A549 (cell line): ENCODE measurements at regions of chr4 and their contacts with region 1.

Region 1: GRCh38 chr4:53929955-53930798 is 134.2 kb downstream of the CHIC2 start:
- DNase-seq: peak; percentile 65 to 78
- ATAC-seq: peak; percentile 96 to 97
- H3K4me3 ChIP-seq: no peak overlapping the region
- H3K27ac ChIP-seq: peak overlapping the region; percentile 15 to 53; a peak in 1 of 6 replicates
- H3K4me1 ChIP-seq: peaks cover 16% of the 10 kb centered on the region; the same call in 1 of the 3 replicates
- CTCF ChIP-seq: peak; percentile 67
- EP300 ChIP-seq: no peak
- POLR2A ChIP-seq: no peak
- RAD21 ChIP-seq: peak; percentile 73 to 79

Region 2: DNA sequence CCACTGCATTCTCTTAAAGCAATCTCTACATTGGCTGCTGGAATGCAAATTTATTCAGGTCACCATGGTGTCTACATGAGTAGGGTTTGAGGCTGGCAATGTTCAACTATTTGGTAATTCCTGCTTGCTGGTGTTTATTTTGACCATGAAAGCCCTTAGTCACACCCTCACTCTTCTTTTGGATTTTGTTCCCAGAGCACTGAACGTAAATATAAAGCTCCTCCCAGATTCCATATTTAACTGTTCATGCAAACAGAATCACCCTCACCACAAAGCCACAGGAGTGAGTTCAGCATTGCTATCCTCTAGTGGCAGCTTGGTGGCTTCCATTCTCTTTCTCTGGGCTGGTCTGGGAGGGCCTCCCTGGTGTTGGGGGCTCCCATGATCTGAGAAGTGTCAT is 421.7 kb before region 1 on chr4:
- CTCF ChIA-PET with region 1: no interaction called
- POLR2A ChIA-PET with region 1: no interaction called
- DNase-seq: peak in 1 of 2 experiments; percentile 10
- ATAC-seq: no peak
- H3K4me3 ChIP-seq: no peak overlapping the region
- H3K27ac ChIP-seq: no peak overlapping the region
- H3K4me1 ChIP-seq: no peaks in the 10 kb centered on the region
- CTCF ChIP-seq: no peak
- EP300 ChIP-seq: no peak
- POLR2A ChIP-seq: no peak
- RAD21 ChIP-seq: no peak

Region 3: DNA sequence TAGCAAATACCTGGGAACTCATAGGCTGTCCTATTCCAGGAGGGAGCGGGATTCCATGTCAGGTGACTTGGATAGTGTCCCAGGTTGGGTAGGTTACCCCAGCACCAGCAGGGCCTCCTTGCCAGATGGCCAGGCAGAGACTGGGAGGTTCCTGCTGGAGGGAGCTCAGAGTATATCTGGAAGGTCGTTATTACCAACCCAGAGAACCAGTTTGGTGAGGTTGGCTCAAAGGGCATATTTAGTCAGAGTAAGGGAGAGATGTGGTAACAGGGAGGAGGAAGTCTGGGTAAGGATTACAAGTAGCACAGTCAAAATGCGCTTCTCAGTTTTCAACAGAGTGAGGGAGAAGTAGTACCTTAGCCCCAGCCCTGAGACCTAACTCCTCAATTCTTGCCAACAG is 285.6 kb before region 1 on chr4:
- CTCF ChIA-PET with region 1: no interaction called
- POLR2A ChIA-PET with region 1: no interaction called
- DNase-seq: no peak
- ATAC-seq: no peak
- H3K4me3 ChIP-seq: no peak overlapping the region
- H3K27ac ChIP-seq: no peak overlapping the region
- H3K4me1 ChIP-seq: no peaks in the 10 kb centered on the region
- CTCF ChIP-seq: no peak
- EP300 ChIP-seq: no peak
- POLR2A ChIP-seq: no peak
- RAD21 ChIP-seq: no peak

Region 4: DNA sequence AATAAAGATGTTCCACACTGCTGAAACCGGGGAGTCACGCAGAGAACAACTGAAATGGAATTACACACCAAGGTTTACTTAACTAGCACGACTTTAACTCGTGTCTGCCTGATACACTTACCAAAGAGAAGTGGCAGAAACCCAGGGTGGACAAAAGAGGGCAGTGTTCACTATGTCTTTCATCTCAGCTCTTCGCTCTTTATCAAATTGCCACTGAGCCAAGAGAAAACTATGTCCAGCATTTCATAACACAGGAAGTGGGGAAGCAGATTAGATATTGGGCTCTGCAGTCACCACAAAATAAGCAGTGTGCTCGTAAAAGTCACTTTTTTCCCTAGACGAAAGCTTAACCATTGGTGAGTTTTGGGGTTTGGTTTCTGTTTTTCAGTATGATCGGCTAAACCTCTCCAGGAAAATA is 21.5 kb before region 1 on chr4:
- CTCF ChIA-PET with region 1: interaction called, 42 read pairs
- POLR2A ChIA-PET with region 1: interaction called, 5 read pairs
- DNase-seq: peak; percentile 57 to 77
- ATAC-seq: peak; percentile 91 to 97
- H3K4me3 ChIP-seq: no peak overlapping the region
- H3K27ac ChIP-seq: peak overlapping the region; percentile 50 to 70; a peak in 5 of 6 replicates
- H3K4me1 ChIP-seq: peaks cover 19% of the 10 kb centered on the region; the same call in 2 of the 3 replicates
- CTCF ChIP-seq: peak; percentile 74
- EP300 ChIP-seq: no peak
- POLR2A ChIP-seq: no peak
- RAD21 ChIP-seq: peak; percentile 82 to 83

Region 5: DNA sequence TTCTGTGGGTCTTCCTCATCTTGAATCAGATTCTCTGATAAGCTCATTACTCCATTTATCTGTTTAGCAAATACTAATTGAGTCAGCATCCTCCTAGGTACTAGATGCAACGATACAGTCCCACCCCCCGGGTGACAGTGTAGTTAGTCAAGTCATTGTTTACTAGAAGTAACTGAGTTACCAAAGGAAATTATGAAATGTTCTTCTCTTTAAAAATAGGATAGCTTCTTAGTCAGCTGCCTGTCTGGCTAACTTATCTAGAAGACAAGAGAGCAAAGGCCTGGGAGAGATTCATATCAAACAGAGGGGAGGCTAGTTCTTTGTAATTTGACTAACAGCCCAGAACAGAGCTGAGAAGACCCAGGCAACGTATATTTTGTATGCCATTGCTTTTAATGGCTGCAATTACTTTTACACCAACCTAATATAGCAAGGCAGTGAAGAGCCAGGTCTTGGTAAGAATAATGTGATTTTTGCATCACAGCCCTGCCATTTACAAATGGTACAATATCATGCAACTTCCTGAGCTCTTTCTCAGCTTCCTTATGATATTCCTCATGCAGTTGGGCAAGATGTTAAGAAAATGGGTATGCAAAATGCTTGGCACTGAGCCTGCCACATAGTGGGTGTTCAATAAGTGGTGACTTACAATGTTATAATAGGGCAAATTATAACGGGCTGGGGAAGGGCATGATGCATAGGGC is 15.7 kb before region 1 on chr4:
- CTCF ChIA-PET with region 1: interaction called, 42 read pairs
- POLR2A ChIA-PET with region 1: interaction called, 5 read pairs
- DNase-seq: peak; percentile 21 to 73
- ATAC-seq: peak; percentile 84 to 92
- H3K4me3 ChIP-seq: no peak overlapping the region
- H3K27ac ChIP-seq: peak overlapping the region; percentile 60 to 61; a peak in 5 of 6 replicates
- H3K4me1 ChIP-seq: peaks cover 19% of the 10 kb centered on the region
- CTCF ChIP-seq: no peak
- EP300 ChIP-seq: peak; percentile 31; a peak in 2 of 5 replicates
- POLR2A ChIP-seq: no peak
- RAD21 ChIP-seq: no peak

Region 6: GRCh38 chr4:53920116-53920515 is 10.1 kb before region 1 on chr4:
- CTCF ChIA-PET with region 1: interaction called, 24 read pairs
- POLR2A ChIA-PET with region 1: interaction called, 5 read pairs
- DNase-seq: no peak
- ATAC-seq: no peak
- H3K4me3 ChIP-seq: no peak overlapping the region
- H3K27ac ChIP-seq: no peak overlapping the region
- H3K4me1 ChIP-seq: peaks cover 3% of the 10 kb centered on the region
- CTCF ChIP-seq: no peak
- EP300 ChIP-seq: no peak
- POLR2A ChIP-seq: no peak
- RAD21 ChIP-seq: no peak

Region 7: DNA sequence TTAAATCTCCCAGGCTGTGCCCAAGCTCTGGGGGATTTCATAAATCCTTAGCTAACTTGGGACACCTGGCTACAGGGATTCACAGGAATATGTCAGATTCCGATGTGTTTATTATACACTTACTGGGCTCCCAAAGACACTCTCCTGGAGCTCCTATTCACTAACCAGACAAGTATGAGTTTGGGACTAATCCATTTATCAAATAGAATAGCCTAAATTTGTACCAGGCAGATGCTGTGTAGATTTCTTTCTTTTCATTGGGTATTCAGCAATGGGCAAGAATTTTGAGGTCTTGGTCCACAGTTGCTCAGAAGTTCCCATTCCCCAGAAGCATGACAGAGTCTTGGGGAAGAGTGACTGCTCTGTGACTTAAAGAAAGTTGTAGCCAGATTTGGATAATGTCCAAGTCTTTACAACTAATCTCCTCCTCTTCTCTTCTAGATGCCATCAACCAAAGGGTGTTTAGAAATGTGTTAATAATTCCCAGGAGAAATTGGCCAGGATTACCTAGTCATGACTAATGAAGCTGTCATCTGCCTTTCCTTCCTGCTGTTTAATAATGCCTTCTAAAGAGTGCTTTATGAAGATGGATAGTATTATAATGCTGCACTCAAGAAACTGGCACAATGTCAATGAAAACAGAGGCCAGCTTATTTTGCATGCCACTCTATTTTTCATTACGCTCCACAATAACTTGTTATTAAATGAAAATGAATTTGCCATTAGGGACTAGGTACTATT is 13.3 kb after region 1 on chr4:
- CTCF ChIA-PET with region 1: interaction called, 10 read pairs
- POLR2A ChIA-PET with region 1: no interaction called
- DNase-seq: peak in 1 of 2 experiments; percentile 9
- ATAC-seq: no peak
- H3K4me3 ChIP-seq: no peak overlapping the region
- H3K27ac ChIP-seq: no peak overlapping the region
- H3K4me1 ChIP-seq: peaks cover 8% of the 10 kb centered on the region; the same call in 1 of the 3 replicates
- CTCF ChIP-seq: no peak
- EP300 ChIP-seq: no peak
- POLR2A ChIP-seq: no peak
- RAD21 ChIP-seq: no peak

Region 8: DNA sequence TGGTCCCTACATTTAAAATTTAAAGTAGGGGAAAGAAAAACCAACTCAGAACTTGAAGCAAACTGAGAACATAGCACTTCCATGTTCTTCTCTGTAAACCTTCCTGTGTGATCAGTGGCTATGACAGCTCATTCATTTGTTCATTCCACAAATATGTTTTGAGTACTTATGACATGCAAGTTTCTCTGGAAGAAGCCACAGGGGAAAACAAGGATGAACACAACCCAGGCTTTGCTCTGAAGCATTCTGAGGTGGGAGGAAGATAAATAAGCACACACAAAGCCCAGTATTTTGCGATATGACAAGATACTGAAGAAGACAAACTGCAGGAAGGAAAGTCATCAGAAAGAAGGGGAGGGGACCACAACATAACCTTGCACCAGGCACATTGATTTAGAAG is 37.8 kb after region 1 on chr4:
- CTCF ChIA-PET with region 1: no interaction called
- POLR2A ChIA-PET with region 1: no interaction called
- DNase-seq: no peak
- ATAC-seq: no peak
- H3K4me3 ChIP-seq: no peak overlapping the region
- H3K27ac ChIP-seq: no peak overlapping the region
- H3K4me1 ChIP-seq: no peaks in the 10 kb centered on the region
- CTCF ChIP-seq: no peak
- EP300 ChIP-seq: no peak
- POLR2A ChIP-seq: no peak
- RAD21 ChIP-seq: no peak

Region 9: DNA sequence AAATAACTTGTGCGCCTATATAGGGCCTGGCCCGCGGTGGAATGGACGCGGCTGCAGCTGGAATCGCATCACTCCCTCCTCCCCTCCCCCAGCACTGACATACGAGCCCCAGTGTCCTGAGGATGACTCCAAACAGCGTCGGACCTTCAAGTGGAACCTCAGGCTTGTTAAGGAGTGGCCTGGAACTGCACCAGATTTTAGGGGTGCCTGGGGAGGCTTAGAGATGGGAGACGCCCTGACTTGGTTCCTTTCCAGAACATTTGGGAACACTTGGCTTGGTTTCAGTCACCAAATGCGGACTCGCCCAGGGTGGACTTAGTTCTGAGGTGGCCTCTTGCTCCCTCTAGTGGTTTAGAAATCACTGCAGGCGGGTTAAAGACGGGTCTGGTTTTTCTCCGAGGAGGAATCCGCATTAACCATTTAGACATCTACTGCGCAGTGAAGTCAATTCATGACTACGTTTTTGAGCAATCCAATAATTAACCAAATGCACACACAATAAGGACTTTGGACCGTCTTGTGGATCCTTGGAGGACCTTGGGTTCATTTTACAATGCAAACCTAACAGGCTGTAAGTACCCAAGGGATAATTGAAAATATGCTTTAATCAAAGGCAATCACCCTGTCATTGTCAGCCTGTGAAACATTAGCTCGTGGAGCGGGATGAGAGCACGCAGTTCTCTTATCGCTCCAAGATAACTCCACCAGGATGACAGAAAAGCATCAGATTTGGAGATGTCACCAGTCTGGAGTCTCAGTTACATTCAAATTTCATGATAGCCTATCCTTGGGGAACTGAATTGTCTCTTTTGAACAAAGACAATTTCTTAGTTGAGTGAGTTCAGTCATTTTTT is 287.7 kb after region 1 on chr4:
- CTCF ChIA-PET with region 1: interaction called, 82 read pairs
- POLR2A ChIA-PET with region 1: no interaction called
- DNase-seq: peak; percentile 61 to 72
- ATAC-seq: peak; percentile 93 to 97
- H3K4me3 ChIP-seq: peak overlapping the region; percentile 45
- H3K27ac ChIP-seq: peak overlapping the region; percentile 64 to 76
- H3K4me1 ChIP-seq: 0 out of 3 replicates have a peak, but pooled peaks cover 4% of the 10 kb centered on the region
- CTCF ChIP-seq: peak; percentile 75
- EP300 ChIP-seq: no peak
- POLR2A ChIP-seq: no peak
- RAD21 ChIP-seq: peak; percentile 87 to 91